ENCODE measurements at regions of chr19 and their contacts with region 1.

Region 1: DNA sequence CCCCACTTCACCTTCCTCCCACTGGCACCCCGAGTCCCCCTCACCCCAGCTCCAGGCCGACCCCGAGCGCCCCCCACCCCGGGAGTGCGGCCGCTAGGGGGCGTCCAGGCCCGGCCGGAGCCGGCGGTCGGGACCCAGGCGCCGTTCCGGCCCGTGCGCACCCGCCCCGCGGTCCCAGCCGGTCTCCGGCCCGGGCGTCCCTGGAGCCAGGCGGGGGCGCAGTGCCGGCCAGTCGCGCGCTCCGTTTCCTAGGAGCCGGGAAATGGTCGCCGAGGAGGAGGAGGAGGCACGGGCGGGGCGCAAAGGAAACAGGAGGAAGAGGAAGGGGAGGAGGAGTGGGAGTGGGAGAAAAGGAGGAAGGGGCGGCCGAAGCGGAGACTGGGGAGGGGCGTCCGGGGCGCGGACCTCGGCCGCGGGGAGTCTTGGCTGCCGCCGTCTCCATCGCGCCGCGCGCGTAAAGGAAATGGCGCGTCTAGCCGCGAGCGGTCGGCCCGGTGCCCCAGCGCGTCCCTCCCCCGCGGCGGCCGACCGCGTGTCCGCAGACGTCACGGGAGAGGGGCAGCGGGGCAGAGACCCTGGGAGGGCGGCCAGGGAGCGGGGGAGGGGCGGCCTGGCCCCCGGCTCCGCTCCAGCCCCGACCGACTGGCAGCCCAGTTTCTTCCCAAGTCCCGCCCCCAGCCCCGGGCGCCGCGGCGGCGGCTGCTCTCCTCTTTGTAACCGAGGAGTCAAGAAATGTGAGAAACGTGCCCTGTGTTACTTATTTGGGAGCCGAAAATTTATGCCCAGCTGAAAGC is 1.1 kb upstream of the KCTD15 start:
- DNase-seq: peak; percentile 79 to 80
- ATAC-seq: peak; percentile 82 to 85 (median 84)
- H3K4me3 ChIP-seq: peak overlapping the region; percentile 74
- H3K27ac ChIP-seq: peak overlapping the region; percentile 78
- H3K4me1 ChIP-seq: peaks cover 15% of the 10 kb centered on the region
- H3K27me3 ChIP-seq: peaks cover 0 to 47% (median 10%) of the 10 kb centered on the region in 3 donors
- CTCF ChIP-seq: peak; percentile 75

Region 2: GRCh38 chr19:33905937-33906576 is 110.5 kb after region 1 on chr19:
- intact Hi-C with region 1: loop called in 1 of 2 experiments (anchors 10 kb)
- DNase-seq: peak; percentile 73 to 75
- ATAC-seq: peak; percentile 40 to 77 (median 71)
- H3K4me3 ChIP-seq: peak overlapping the region; percentile 62
- H3K27ac ChIP-seq: peak overlapping the region; percentile 75
- H3K4me1 ChIP-seq: no peaks in the 10 kb centered on the region
- H3K27me3 ChIP-seq: peaks cover 0 to 46% (median 17%) of the 10 kb centered on the region in 3 donors
- CTCF ChIP-seq: no peak

Region 3: GRCh38 chr19:33998739-33999345 is 203.3 kb after region 1 on chr19:
- intact Hi-C with region 1: loop called in 1 of 2 experiments (anchors 2 kb)
- DNase-seq: no peak
- ATAC-seq: no peak
- H3K4me3 ChIP-seq: no peak overlapping the region
- H3K27ac ChIP-seq: no peak overlapping the region
- H3K4me1 ChIP-seq: no peaks in the 10 kb centered on the region
- H3K27me3 ChIP-seq: peaks cover 0 to 9% (median 0%) of the 10 kb centered on the region in 3 donors
- CTCF ChIP-seq: peak; percentile 44